GM12878 (cell line): ENCODE measurements at regions of chr2 and their contacts with region 1.

Region 1: DNA sequence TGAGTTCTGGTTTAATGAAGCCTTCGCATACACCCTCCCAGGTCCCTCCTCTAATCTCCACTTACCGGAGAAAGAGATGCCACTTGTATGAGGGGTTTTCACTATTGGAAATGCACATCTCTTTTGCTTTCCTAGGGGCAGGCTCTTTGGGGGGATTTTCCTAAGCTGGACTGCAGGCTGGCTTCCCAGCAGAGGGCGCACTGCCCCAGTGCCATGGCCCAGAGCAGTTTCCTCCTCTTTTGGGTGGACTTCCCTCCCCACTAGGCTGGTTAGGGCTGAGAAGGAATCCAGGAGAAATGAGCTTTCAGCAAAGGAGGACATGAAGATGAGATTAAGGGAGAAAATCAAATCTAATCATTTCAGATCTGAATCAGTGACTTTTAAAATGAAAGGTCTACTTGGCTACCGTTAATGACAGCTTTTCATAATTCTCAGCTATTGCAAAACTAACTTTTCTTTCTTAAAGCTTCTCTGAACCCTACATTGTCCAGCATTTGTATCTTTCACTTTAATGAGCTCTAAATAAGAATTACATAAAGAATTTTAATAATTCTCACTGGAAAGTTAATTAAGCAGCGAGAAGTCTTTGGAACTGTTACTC is 784.1 kb upstream of the FANCL start:
- DNase-seq: no peak
- ATAC-seq: peak; percentile 90
- H3K4me3 ChIP-seq: no peak overlapping the region
- H3K27ac ChIP-seq: no peak overlapping the region
- H3K4me1 ChIP-seq: no peaks in the 10 kb centered on the region
- H3K27me3 ChIP-seq: 0 out of 4 replicates have a peak, but pooled peaks cover 0 to 2% of the 10 kb centered on the region in 2 experiments
- CTCF ChIP-seq: peak; percentile 75 to 96 (median 94)
- EP300 ChIP-seq: no peak
- POLR2A ChIP-seq: no peak
- RAD21 ChIP-seq: peak; percentile 70

Region 2: DNA sequence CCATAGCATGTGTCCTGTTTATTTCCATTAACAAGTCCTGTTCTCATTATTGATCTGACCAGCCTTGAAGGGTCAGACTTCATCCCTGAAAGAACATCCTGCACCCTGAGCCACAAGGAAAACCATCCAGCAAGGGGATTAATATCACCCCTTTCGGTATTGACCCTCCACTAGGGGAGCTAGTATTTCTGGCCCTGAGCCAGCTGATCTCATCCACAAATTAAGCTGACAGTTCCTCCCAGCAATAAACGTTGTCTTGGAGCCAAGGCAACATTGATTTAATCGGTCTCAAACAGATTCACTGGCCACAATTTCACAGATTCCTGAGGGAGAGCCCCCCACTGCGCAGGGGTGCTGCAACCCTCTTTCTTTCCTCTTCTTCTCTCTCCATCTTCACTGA is 431.1 kb before region 1 on chr2:
- CTCF ChIA-PET with region 1: no interaction called
- POLR2A ChIA-PET with region 1: no interaction called
- RAD21 ChIA-PET with region 1: no interaction called
- SMC1A ChIA-PET with region 1: no interaction called
- in situ Hi-C with region 1: no loop called
- intact Hi-C with region 1: no loop called
- DNase-seq: no peak
- ATAC-seq: no peak
- H3K4me3 ChIP-seq: no peak overlapping the region
- H3K27ac ChIP-seq: no peak overlapping the region
- H3K4me1 ChIP-seq: no peaks in the 10 kb centered on the region
- H3K27me3 ChIP-seq: no peaks in the 10 kb centered on the region
- CTCF ChIP-seq: peak in 2 of 3 experiments; percentile 10 to 15; a peak in 2 of 6 replicates
- EP300 ChIP-seq: no peak
- POLR2A ChIP-seq: no peak
- RAD21 ChIP-seq: no peak

Region 3: GRCh38 chr2:59015027-59015426 is 10.2 kb before region 1 on chr2:
- CTCF ChIA-PET with region 1: interaction called, 10 read pairs
- POLR2A ChIA-PET with region 1: no interaction called
- RAD21 ChIA-PET with region 1: interaction called, 3 read pairs
- SMC1A ChIA-PET with region 1: interaction called, 5 read pairs
- in situ Hi-C with region 1: no loop called
- intact Hi-C with region 1: no loop called
- DNase-seq: no peak
- ATAC-seq: no peak
- H3K4me3 ChIP-seq: no peak overlapping the region
- H3K27ac ChIP-seq: no peak overlapping the region
- H3K4me1 ChIP-seq: no peaks in the 10 kb centered on the region
- H3K27me3 ChIP-seq: no peaks in the 10 kb centered on the region; a peak in 1 of 4 replicates
- CTCF ChIP-seq: no peak
- EP300 ChIP-seq: no peak
- POLR2A ChIP-seq: no peak
- RAD21 ChIP-seq: no peak

Region 4: DNA sequence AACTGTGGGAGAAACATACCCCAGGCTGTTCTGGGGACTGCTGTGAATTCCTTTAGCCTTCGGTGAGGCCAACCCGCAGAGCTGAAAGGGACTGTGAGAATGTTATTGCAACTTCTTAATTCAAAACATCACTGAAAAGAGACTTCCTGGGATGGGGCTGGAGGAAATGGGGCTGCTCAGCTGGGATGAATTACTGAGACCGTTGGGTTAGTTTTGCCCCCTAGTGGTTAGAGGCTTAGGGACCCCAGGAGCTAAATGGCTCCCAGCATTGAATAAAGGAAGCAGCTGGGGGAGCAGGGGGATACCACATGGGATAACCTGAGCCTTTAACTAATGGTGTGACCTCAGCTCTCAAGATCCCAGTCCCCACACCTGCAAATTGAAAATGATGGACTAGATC is 157.0 kb after region 1 on chr2:
- CTCF ChIA-PET with region 1: interaction called, 13 read pairs
- POLR2A ChIA-PET with region 1: no interaction called
- RAD21 ChIA-PET with region 1: interaction called, 8 read pairs
- SMC1A ChIA-PET with region 1: interaction called, 8 read pairs
- in situ Hi-C with region 1: no loop called
- intact Hi-C with region 1: loop called (anchors 5 kb)
- DNase-seq: no peak
- ATAC-seq: peak; percentile 66
- H3K4me3 ChIP-seq: no peak overlapping the region
- H3K27ac ChIP-seq: no peak overlapping the region
- H3K4me1 ChIP-seq: no peaks in the 10 kb centered on the region
- H3K27me3 ChIP-seq: no peaks in the 10 kb centered on the region; a peak in 1 of 4 replicates
- CTCF ChIP-seq: peak; percentile 33 to 56 (median 49); a peak in 4 of 6 replicates
- EP300 ChIP-seq: no peak
- POLR2A ChIP-seq: no peak
- RAD21 ChIP-seq: peak; percentile 37; the same call in 1 of the 2 replicates

Region 5: DNA sequence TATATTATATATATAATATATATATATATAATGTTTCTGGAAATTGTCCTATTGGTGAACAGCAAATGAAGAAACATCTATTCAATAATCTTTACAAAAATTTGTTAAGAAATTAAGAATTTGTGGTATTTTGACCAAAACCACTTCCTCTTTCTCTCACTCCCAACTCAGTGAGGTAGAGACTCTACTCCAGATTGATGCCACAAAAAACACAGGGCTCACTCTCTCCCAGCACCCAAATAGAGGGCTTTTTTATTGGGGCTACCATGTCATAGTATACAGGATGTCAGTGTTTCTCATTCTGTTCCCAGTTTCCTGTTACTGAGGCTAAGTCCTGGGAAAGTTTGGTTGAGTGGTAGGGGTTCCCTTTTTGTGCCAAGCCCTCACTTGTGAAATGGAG is 372.8 kb after region 1 on chr2:
- CTCF ChIA-PET with region 1: no interaction called
- POLR2A ChIA-PET with region 1: no interaction called
- RAD21 ChIA-PET with region 1: no interaction called
- SMC1A ChIA-PET with region 1: no interaction called
- in situ Hi-C with region 1: no loop called
- intact Hi-C with region 1: no loop called
- DNase-seq: no peak
- ATAC-seq: no peak
- H3K4me3 ChIP-seq: no peak overlapping the region
- H3K27ac ChIP-seq: no peak overlapping the region
- H3K4me1 ChIP-seq: no peaks in the 10 kb centered on the region
- H3K27me3 ChIP-seq: no peaks in the 10 kb centered on the region
- CTCF ChIP-seq: no peak
- EP300 ChIP-seq: no peak
- POLR2A ChIP-seq: no peak
- RAD21 ChIP-seq: no peak

Region 6: GRCh38 chr2:60560734-60561644 is 1535.7 kb after region 1 on chr2:
- CTCF ChIA-PET with region 1: interaction called, 3 read pairs
- POLR2A ChIA-PET with region 1: no interaction called
- RAD21 ChIA-PET with region 1: no interaction called
- SMC1A ChIA-PET with region 1: no interaction called
- in situ Hi-C with region 1: loop called (anchors 10 kb)
- intact Hi-C with region 1: loop called (anchors 10 kb)
- DNase-seq: no peak
- ATAC-seq: peak; percentile 93
- H3K4me3 ChIP-seq: no peak overlapping the region
- H3K27ac ChIP-seq: no peak overlapping the region
- H3K4me1 ChIP-seq: peaks cover 4% of the 10 kb centered on the region
- H3K27me3 ChIP-seq: peaks cover 0 to 3% of the 10 kb centered on the region in 2 experiments; a peak in 2 of 4 replicates
- CTCF ChIP-seq: peak; percentile 36 to 57 (median 57); a peak in 5 of 6 replicates
- EP300 ChIP-seq: no peak
- POLR2A ChIP-seq: no peak
- RAD21 ChIP-seq: no peak